B cell (primary cell): ENCODE measurements at regions of chr12 and their contacts with region 1.

Region 1: DNA sequence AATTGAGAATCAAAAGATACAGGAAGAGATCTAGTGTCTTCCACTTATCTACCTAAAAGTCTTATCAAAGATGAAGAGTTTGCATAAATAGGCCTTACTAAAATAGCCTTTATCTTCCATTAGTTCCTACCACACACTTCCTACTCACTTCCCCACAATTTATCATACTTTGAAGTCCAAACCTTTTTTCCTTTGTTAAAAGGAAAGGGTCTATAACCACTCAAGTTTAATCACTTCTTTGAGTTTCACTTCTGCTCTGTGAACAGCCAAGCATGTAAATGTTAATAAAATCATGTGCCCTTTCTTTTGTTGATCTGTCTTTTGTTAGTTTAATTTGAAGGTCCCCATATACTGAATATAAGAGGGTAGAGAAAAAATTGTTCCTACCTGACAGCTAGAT is 114.5 kb downstream of the PHLDA1 start:
- DNase-seq: peak; percentile 55
- ATAC-seq: peak; percentile 73
- H3K4me3 ChIP-seq: no peak overlapping the region
- H3K4me3 Mint-ChIP-seq: peak overlapping the region; percentile 6
- H3K27ac ChIP-seq: no peak overlapping the region
- H3K27ac Mint-ChIP-seq: peak overlapping the region; percentile 1
- H3K4me1 ChIP-seq: peaks cover 13 to 14% of the 10 kb centered on the region in 2 donors
- H3K4me1 Mint-ChIP-seq: peaks cover 23% of the 10 kb centered on the region
- H3K27me3 ChIP-seq: peaks cover 0 to 3% (median 0%) of the 10 kb centered on the region in 4 experiments
- H3K27me3 Mint-ChIP-seq: no peaks in the 10 kb centered on the region
- CTCF ChIP-seq: no peak

Region 2: GRCh38 chr12:75868501-75868900 is 48.6 kb before region 1 on chr12:
- CTCF ChIA-PET with region 1: no interaction called
- POLR2A ChIA-PET with region 1: no interaction called
- intact Hi-C with region 1: no loop called
- DNase-seq: no peak
- ATAC-seq: no peak
- H3K4me3 ChIP-seq: no peak overlapping the region
- H3K4me3 Mint-ChIP-seq: no peak overlapping the region
- H3K27ac ChIP-seq: no peak overlapping the region
- H3K27ac Mint-ChIP-seq: no peak overlapping the region
- H3K4me1 ChIP-seq: no peaks in the 10 kb centered on the region
- H3K4me1 Mint-ChIP-seq: no peaks in the 10 kb centered on the region
- H3K27me3 ChIP-seq: no peaks in the 10 kb centered on the region
- H3K27me3 Mint-ChIP-seq: peaks cover 13% of the 10 kb centered on the region
- CTCF ChIP-seq: no peak

Region 3: GRCh38 chr12:75977952-75978671 is 61.0 kb after region 1 on chr12:
- CTCF ChIA-PET with region 1: no interaction called
- POLR2A ChIA-PET with region 1: no interaction called
- intact Hi-C with region 1: loop called (anchors 1 kb)
- DNase-seq: peak; percentile 43
- ATAC-seq: peak; percentile 94
- H3K4me3 ChIP-seq: no peak overlapping the region
- H3K4me3 Mint-ChIP-seq: peak overlapping the region; percentile 4
- H3K27ac ChIP-seq: no peak overlapping the region
- H3K27ac Mint-ChIP-seq: peak overlapping the region; percentile 16
- H3K4me1 ChIP-seq: peaks cover 0 to 5% of the 10 kb centered on the region in 2 donors
- H3K4me1 Mint-ChIP-seq: peaks cover 18% of the 10 kb centered on the region
- H3K27me3 ChIP-seq: no peaks in the 10 kb centered on the region
- H3K27me3 Mint-ChIP-seq: no peaks in the 10 kb centered on the region
- CTCF ChIP-seq: no peak